Posterior cingulate gyrus (tissue), 11 donors: ENCODE measurements at regions of chr2 and their contacts with region 1.

Region 1: DNA sequence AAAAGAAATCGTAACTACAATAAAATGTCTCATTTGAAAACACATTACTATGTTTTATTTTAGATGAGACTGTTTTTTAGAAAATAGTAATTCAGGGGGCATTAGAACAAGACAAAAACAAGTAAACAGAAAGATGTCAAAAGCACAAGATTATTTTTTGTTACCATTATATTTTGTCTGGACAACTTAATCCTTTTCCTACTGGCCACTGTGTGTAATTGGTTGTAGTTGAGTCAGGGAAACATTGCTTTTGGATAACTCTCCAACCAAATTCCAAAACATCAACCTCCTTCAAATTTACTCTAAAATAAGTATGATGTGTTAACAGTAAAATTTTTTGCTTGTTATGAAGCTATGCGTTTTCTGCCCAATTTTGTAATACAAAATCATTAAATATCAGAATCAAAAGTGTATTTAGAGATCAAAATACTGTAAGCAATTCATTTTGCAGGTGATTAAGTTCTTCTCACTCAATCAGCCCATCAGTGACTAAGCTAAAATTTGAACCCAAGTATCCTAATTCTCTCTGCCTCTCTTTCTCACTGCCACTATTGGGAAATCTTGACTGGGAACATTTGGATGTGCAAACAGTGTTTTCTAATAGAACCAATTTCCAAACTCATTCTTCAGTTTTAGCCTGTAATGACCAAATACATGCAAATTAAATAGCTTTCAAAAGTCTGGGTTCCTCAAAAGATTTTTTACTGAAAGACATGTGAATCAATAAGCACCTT is 11.4 kb upstream of the MEIS1 start:
- DNase-seq: no peak

Region 2: DNA sequence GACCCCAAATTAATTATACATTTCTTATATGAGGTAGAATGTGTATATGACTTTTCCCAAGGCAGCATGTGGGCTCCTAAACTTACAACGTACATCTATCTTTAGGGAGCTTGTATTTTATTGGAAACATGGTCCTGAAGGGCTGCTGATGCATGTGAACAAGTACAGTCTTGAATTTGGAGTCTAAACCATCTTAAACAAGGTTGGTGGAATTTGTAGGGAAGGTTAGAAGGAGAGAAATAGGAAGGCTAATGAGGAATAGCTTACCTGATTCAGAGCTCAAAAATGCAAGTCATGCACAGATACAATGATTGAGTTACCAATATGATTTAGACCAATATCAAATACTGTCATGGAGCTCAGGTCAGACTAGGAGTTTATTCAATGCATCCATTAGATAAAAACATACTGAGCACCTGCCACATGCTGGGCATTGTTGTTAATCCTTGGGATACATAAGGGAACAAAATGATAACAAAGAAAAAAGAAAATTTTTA is 515.0 kb after region 1 on chr2:
- intact Hi-C with region 1: no loop called
- DNase-seq: no peak

Region 3: GRCh38 chr2:67840460-67841068 is 1417.0 kb after region 1 on chr2:
- intact Hi-C with region 1: loop called (anchors 5 kb)
- DNase-seq: peak; percentile 19 to 93 (median 55)